A673 (cell line): ENCODE measurements at regions of chr14 and their contacts with region 1.

Region 1: GRCh38 chr14:21583502-21583901 is 3.6 kb upstream of the OR10G3 start:
- DNase-seq: no peak
- H3K4me3 ChIP-seq: no peak overlapping the region
- H3K27ac ChIP-seq: no peak overlapping the region
- H3K4me1 ChIP-seq: no peaks in the 10 kb centered on the region
- H3K27me3 ChIP-seq: no peaks in the 10 kb centered on the region
- CTCF ChIP-seq: no peak

Region 2: GRCh38 chr14:21514341-21514740 is 69.2 kb before region 1 on chr14:
- CTCF ChIA-PET with region 1: no interaction called
- POLR2A ChIA-PET with region 1: no interaction called
- intact Hi-C with region 1: no loop called
- DNase-seq: no peak
- H3K4me3 ChIP-seq: no peak overlapping the region
- H3K27ac ChIP-seq: no peak overlapping the region
- H3K4me1 ChIP-seq: peaks cover 4% of the 10 kb centered on the region
- H3K27me3 ChIP-seq: no peaks in the 10 kb centered on the region
- CTCF ChIP-seq: no peak

Region 3: DNA sequence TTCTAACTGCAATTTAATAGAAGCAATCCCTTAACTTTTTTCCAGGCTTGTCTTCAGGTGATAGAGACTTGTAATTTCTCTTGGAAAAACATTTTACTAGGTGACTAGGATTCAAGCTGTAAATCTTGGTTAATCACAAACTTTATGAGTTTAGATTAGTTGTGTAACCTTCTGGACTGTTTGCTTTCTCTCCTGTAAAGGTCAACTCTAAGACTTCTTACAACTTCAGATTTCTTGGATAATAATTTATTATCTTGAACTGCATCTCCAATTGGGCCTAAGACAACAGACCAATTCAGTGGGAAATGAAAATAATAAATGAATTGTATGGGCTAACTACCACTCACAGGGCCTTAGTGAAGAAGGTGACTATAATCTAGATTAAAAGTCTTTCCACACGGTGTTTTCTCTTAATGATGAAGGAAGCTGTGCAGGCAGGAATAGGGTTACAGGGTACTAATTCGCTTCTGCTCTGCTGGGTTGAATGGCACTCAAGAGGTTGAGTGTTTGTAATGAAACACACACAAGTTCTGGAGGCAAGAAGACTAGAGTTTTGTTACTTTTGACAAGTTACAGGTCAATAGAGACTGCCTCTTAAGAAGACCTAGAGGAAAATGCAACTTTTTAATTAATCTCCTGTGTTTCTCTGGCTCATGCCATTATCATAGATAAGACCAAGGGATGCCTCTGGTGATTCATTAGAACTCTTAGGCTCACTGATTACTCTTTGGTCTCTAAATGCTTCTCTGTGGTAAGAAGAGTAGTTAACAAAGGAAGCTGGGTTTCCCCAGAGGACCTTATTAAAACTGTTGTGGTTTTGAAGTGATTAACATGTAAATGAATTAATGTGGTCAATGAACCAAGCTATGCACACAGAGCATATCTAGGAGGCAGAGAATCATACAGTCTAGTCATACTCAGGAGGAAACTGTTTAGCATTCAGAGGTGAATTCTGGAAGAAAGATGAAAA is 120.1 kb after region 1 on chr14:
- CTCF ChIA-PET with region 1: no interaction called
- POLR2A ChIA-PET with region 1: interaction called, 10 read pairs
- intact Hi-C with region 1: no loop called
- DNase-seq: peak; percentile 61
- H3K4me3 ChIP-seq: no peak overlapping the region
- H3K27ac ChIP-seq: no peak overlapping the region
- H3K4me1 ChIP-seq: peaks cover 9% of the 10 kb centered on the region
- H3K27me3 ChIP-seq: no peaks in the 10 kb centered on the region
- CTCF ChIP-seq: no peak